ENCODE measurements at regions of chr13 and their contacts with region 1.

Region 1: GRCh38 chr13:97567510-97568243 is 133.7 kb downstream of the RAP2A start:
- DNase-seq: no peak
- ATAC-seq: peak in 2 of 4 donors; percentile 36 to 48
- H3K4me3 ChIP-seq: no peak overlapping the region
- H3K27ac ChIP-seq: no peak overlapping the region
- H3K4me1 ChIP-seq: peaks cover 0 to 14% (median 4%) of the 10 kb centered on the region in 12 donors
- H3K27me3 ChIP-seq: peaks cover 0 to 6% (median 0%) of the 10 kb centered on the region in 9 donors
- CTCF ChIP-seq: no peak
- POLR2A ChIP-seq: no peak

Region 2: DNA sequence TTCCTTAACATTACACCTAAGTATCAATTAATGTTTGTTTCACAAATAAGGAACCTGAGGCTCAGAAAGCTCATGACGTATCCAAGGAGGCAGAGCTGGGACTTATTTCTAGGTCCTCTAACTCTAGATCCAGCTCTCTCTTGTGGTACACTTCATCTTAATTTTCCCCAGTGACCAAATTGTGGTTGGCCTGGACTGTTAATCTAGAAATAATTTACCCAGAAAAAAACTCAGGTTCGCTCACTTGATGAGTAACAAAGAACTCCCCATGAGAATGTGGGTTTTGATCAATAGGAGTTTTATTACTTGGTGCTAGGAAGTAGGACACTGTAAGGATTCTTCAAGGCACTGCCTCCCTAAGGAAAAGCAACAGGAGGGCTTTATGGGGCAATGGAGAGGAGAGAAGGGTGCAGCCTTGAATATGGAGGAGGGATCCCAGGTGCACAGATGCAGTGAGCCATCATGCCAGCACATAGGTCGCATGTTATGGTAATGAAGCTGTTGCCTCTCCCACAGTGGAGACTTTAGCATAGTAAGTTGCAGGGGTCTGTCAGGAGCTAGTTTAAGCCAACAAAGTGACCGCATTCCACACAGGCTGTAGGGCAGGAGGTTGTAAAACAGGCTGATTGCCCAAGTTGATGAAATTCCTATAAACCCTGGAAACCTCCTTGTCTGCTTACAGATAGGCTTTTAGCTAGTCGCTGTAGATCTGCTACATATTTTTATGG is 119.0 kb before region 1 on chr13:
- intact Hi-C with region 1: loop called in 1 of 10 experiments (anchors 10 kb)
- DNase-seq: no peak
- ATAC-seq: no peak
- H3K4me3 ChIP-seq: no peak overlapping the region
- H3K27ac ChIP-seq: no peak overlapping the region
- H3K4me1 ChIP-seq: peaks cover 0 to 4% (median 0%) of the 10 kb centered on the region in 12 donors
- H3K27me3 ChIP-seq: no peaks in the 10 kb centered on the region
- CTCF ChIP-seq: no peak
- POLR2A ChIP-seq: no peak

Region 3: DNA sequence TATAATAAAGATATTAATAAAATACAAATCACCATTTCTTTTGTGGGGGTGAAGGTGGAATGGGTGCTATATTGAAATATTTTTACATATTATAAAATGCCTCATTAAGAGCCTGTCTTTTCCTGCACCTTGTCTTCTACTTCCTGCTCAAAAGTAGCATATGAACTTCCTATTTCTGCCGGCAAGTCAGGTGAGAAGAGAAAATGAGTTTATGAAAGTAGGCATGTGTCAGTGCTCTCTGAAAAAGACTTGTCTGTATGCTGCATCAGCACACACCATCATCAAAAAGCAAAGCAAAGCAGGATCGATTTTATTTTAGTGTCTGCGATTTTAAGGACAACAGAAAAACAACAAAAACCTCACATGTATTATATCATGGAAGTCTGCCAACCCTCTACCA is 19.5 kb before region 1 on chr13:
- intact Hi-C with region 1: no loop called
- DNase-seq: no peak
- ATAC-seq: no peak
- H3K4me3 ChIP-seq: no peak overlapping the region
- H3K27ac ChIP-seq: no peak overlapping the region
- H3K4me1 ChIP-seq: peaks cover 0 to 15% (median 0%) of the 10 kb centered on the region in 12 donors
- H3K27me3 ChIP-seq: no peaks in the 10 kb centered on the region
- CTCF ChIP-seq: no peak
- POLR2A ChIP-seq: no peak